GM13976 (cell line): ENCODE measurements at regions of chr6 and their contacts with region 1.

Region 1: DNA sequence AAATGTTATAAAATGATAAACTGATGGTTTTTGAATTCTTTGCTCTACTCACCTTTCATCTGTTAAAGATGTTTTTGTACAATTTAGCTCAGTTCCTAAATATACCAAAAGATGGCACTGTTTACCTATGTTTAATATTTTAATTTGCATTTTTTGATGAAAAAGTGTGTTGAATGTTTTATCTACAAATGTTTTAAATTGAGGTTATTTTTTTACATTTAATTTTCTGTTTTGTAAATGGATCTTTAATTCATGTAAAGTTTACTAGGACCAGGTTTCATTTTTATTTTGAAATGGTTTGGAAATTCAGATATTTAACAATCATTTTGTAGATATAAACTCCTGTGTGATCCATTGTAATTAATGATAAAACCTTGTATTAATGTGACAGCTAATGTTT is 30.0 kb downstream of the CDKAL1 start:
- DNase-seq: peak; percentile 36
- CTCF ChIP-seq: no peak

Region 2: GRCh38 chr6:19866985-19867627 is 697.2 kb before region 1 on chr6:
- in situ Hi-C with region 1: no loop called
- DNase-seq: no peak
- CTCF ChIP-seq: no peak

Region 3: DNA sequence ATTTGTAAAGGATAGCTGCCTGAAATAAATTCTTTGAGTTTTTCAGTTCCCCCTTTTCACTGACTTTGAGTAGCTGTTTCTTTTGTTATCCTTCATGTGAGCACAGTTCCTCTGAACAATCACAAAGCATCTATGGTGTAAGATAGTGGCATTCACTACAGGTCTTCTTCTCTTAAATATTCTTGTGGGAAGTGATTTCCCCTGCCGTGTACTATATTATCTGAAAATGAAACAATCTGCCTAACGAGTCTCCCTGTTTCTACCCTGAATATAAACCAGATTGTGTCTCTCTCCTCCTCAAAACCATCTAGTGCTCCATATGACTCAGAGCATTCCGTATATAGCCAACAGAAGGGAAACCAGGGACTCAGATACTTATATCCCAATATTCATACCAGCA is 649.2 kb after region 1 on chr6:
- in situ Hi-C with region 1: loop called (anchors 25 kb)
- DNase-seq: peak; percentile 58
- CTCF ChIP-seq: no peak

Region 4: DNA sequence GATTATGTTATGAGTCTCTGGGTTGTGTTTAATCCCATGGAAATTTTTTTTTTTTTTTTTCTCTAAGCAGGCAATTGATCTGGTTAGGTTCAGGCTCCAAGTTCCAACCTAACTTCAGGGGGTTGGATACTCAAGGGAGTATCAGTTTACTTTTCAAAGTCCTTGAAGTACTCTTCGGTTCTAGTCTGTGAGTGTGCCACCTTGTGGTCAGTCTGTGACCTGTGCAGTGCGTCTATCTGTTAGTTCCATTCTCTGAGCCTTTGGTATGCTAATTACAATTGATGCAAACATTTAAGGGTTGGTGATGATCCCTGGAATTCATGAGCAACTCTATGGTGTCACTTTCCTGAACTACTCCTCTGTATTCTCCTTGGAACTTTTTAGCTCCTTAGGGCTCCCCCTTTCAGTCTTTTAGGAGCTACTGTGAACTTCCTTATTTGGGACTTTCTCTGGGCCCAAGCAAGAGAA is 1371.3 kb after region 1 on chr6:
- in situ Hi-C with region 1: loop called (anchors 25 kb)
- DNase-seq: no peak
- CTCF ChIP-seq: peak; percentile 30